ENCODE measurements at regions of chr3 and their contacts with region 1.

Region 1: DNA sequence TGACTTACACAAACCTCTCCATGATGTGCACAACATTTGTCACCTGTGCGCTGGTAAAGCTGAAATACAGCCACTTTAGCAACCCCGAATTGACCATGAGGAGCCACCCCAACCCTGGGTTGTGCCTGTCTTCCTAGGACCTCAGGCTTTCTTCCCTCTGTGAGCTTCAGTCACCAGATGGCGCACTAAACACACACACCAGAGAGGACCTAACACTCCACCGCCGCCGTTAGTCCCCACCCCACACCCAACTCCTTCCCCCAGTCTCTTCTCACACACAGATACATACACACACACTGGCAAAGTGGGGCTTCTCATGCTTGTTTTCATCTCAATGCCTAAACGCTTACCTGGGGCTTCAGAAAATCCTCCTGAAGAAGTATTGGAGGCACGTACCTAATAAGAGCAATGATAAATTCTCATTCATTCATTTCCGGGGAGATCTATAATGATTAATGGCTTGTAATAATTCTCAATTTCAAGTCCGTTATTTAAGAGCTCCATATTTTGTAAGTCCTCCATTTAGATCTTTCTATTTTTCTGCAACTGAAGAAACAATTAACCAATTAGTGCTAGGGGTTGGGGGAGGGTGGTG is 2.1 kb upstream of the CCDC80 start:
- DNase-seq: peak; percentile 88 to 94
- ATAC-seq: peak; percentile 70 to 84
- H3K4me3 ChIP-seq: 0 out of 3 replicates have a peak overlapping the region, but pooled peaks have one; percentile 20
- H3K27ac ChIP-seq: peak overlapping the region; percentile 90 to 99
- H3K4me1 ChIP-seq: peaks cover 65% of the 10 kb centered on the region
- CTCF ChIP-seq: peak; percentile 96
- EP300 ChIP-seq: no peak
- POLR2A ChIP-seq: no peak
- RAD21 ChIP-seq: peak; percentile 100

Region 2: DNA sequence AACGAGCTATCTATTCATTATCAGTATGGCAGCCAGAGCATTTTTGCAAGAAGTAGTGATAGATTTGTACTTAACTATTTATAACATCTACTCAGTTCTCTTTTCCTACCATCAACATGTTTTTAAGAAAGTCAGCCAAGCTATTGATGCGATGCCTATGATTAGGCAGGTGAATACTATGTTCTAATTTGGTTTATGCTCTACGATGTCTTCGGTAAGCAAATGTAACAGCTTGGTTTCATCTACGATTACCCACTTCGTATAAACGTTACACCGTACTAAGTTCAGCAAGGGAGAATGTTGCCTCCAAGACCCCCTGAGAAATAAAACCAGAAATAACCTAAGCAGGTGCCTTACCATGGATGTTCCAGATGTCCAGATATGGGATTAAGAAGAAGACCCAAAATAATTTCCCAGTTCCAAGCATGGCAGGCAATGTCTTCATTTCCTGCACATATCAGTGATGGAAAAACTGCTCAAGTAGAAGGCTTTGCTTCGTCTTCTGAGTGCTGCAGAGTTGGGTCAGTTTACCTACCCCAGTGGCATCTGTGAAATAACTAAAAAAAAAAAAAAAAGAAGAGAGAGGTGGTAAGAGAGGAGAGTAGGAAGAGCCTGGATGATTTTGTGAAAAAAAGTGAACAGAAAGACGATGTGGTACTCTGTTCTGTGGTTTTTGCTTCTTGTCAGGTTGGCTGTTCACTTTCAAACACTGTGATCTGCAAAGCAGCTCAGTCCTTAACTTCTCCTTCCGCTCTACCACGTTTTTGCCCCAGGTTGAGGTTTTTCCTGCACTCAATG is 143.9 kb before region 1 on chr3 and contains the start of gene BTLA:
- CTCF ChIA-PET with region 1: no interaction called
- POLR2A ChIA-PET with region 1: no interaction called
- DNase-seq: no peak
- ATAC-seq: no peak
- H3K4me3 ChIP-seq: no peak within 1 kb of the TSS
- H3K27ac ChIP-seq: no peak within 1 kb of the TSS
- H3K4me1 ChIP-seq: no peaks in the 10 kb centered on the region
- CTCF ChIP-seq: no peak
- EP300 ChIP-seq: no peak
- POLR2A ChIP-seq: no peak
- RAD21 ChIP-seq: no peak
- polyA plus RNA-seq, gene BTLA: 0.03 TPM in 1 of 2 replicates, not detected in the other

Region 3: DNA sequence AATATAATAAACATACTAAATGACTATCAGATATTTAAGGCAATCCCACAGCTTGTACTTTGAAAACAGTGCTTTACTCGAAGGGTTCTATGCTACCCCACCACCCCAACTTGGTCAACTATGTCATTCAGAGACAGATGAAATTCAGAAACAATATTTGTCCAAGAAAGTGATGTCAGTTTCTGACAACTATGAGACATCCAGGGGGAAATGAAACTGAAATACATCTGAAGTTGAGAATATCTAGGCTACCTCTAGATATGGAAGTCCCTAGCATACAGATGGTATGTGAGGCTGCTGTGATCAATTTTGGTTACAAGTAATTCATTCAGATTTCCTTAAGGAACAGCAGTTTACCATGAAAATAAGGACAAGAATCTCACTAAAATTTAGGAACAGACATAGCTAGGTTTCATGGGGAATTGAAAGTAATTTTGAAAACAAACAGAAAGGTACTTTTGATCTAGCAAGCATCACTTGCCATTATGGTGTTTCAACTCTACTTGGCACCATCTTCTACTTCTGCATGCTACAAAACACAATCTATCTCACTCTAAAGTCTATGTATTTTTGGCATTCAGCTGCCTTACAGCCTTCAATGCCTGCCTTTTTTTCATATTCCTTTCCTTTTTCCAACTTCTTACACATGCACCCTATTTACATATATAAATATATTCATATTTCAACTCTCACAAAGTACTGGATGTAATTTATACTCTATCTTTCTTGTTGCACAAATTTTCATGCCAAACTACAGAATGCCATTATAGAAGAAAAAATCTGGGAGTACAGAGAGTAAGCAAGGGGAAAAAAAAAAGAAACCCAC is 103.0 kb before region 1 on chr3:
- CTCF ChIA-PET with region 1: no interaction called
- POLR2A ChIA-PET with region 1: no interaction called
- DNase-seq: no peak
- ATAC-seq: no peak
- H3K4me3 ChIP-seq: no peak overlapping the region
- H3K27ac ChIP-seq: no peak overlapping the region
- H3K4me1 ChIP-seq: no peaks in the 10 kb centered on the region
- CTCF ChIP-seq: no peak
- EP300 ChIP-seq: no peak
- POLR2A ChIP-seq: no peak
- RAD21 ChIP-seq: no peak

Region 4: GRCh38 chr3:112582244-112582874 is 60.6 kb before region 1 on chr3:
- CTCF ChIA-PET with region 1: interaction called, 40 read pairs
- POLR2A ChIA-PET with region 1: interaction called, 18 read pairs
- DNase-seq: peak in 1 of 2 experiments; percentile 77
- ATAC-seq: peak; percentile 71 to 74; a peak in 4 of 6 replicates
- H3K4me3 ChIP-seq: no peak overlapping the region
- H3K27ac ChIP-seq: no peak overlapping the region
- H3K4me1 ChIP-seq: no peaks in the 10 kb centered on the region
- CTCF ChIP-seq: peak; percentile 83
- EP300 ChIP-seq: no peak
- POLR2A ChIP-seq: no peak
- RAD21 ChIP-seq: peak; percentile 87 to 90

Region 5: GRCh38 chr3:112681822-112682325 is 38.9 kb after region 1 on chr3:
- CTCF ChIA-PET with region 1: interaction called, 16 read pairs
- POLR2A ChIA-PET with region 1: interaction called, 10 read pairs
- DNase-seq: no peak
- ATAC-seq: peak in 1 of 2 experiments; percentile 54; a peak in 2 of 6 replicates
- H3K4me3 ChIP-seq: no peak overlapping the region
- H3K27ac ChIP-seq: peak overlapping the region; percentile 58 to 85
- H3K4me1 ChIP-seq: peaks cover 63% of the 10 kb centered on the region
- CTCF ChIP-seq: no peak
- EP300 ChIP-seq: no peak
- POLR2A ChIP-seq: no peak
- RAD21 ChIP-seq: no peak

Region 6: DNA sequence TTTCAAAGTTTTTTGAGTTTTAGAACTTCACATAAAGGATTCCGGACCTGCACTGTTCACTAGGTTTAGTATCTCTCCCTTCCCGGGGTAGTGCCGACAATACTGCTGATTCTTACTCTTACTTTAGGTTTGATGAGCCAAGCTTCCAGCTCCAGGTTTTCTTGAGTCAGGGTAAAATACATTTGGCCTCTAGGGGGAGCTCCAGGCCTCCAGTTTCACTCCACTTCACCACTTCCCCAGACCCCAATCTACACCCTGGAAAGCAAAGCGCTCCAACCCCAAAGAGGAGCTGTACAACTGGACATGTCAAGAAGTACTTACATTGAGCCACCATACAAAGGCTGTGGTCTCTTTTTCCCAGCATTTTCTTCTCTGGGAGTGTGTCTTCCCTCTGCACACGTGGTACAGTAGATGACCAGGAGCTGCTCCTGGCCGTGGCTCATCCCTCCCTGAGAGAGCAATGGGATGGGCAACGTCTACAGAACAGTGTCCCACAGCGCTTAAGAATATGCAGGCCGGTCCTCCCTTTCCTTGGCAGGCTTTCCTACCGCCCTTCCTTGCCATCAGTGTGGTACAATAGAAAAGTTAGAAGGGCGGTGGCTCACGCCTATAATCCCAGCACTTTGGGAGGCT is 91.8 kb after region 1 on chr3:
- CTCF ChIA-PET with region 1: interaction called, 101 read pairs
- POLR2A ChIA-PET with region 1: interaction called, 21 read pairs
- DNase-seq: peak; percentile 52 to 90
- ATAC-seq: peak; percentile 95 to 96
- H3K4me3 ChIP-seq: no peak overlapping the region
- H3K27ac ChIP-seq: peak overlapping the region; percentile 70 to 82
- H3K4me1 ChIP-seq: peaks cover 35% of the 10 kb centered on the region
- CTCF ChIP-seq: peak; percentile 87
- EP300 ChIP-seq: no peak
- POLR2A ChIP-seq: no peak
- RAD21 ChIP-seq: peak; percentile 95 to 97

Region 7: DNA sequence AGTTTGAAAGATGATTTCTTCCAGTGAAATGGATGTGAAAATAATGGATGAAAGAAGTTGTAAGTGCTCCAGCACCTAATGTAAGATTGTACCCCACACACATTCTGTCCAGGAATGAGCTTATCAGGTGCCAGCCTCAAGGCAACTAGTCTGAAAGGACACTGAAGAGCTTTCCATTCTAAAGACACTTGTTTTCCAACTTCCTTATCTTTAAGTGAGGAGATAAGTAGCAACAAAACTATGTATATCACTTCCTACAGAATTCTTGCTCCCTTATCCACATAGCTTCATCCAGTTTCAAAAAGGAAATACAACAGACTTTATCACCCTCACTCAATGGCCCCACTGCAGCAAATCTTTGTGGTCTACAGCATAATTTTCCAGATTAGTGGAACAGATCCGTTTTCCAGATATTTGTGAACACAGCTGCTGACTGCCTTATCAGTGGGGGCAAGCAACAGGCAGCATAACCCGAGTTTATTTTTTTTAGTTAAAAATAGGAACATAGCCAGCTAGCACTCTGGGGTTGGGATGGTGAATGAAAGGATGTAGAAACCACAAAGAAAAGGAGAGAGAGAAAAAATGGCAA is 143.1 kb after region 1 on chr3:
- CTCF ChIA-PET with region 1: interaction called, 11 read pairs
- POLR2A ChIA-PET with region 1: no interaction called
- DNase-seq: no peak
- ATAC-seq: no peak
- H3K4me3 ChIP-seq: no peak overlapping the region
- H3K27ac ChIP-seq: no peak overlapping the region
- H3K4me1 ChIP-seq: peaks cover 13% of the 10 kb centered on the region
- CTCF ChIP-seq: no peak
- EP300 ChIP-seq: no peak
- POLR2A ChIP-seq: no peak
- RAD21 ChIP-seq: no peak

Region 8: GRCh38 chr3:112822069-112823055 is 179.4 kb after region 1 on chr3:
- CTCF ChIA-PET with region 1: interaction called, 147 read pairs
- POLR2A ChIA-PET with region 1: interaction called, 3 read pairs
- DNase-seq: peak; percentile 66 to 90
- ATAC-seq: peak; percentile 88 to 92
- H3K4me3 ChIP-seq: no peak overlapping the region
- H3K27ac ChIP-seq: peak overlapping the region; percentile 82 to 85
- H3K4me1 ChIP-seq: peaks cover 36% of the 10 kb centered on the region
- CTCF ChIP-seq: no peak
- EP300 ChIP-seq: peak; percentile 61 to 66; a peak in 4 of 5 replicates
- POLR2A ChIP-seq: no peak
- RAD21 ChIP-seq: no peak

Region 9: GRCh38 chr3:113019182-113020137 is 376.5 kb after region 1 on chr3:
- CTCF ChIA-PET with region 1: interaction called, 8 read pairs
- POLR2A ChIA-PET with region 1: interaction called, 13 read pairs
- DNase-seq: peak; percentile 91 to 94
- ATAC-seq: peak; percentile 99
- H3K4me3 ChIP-seq: peak overlapping the region; percentile 90
- H3K27ac ChIP-seq: peak overlapping the region; percentile 97 to 98
- H3K4me1 ChIP-seq: peaks cover 13% of the 10 kb centered on the region
- CTCF ChIP-seq: no peak
- EP300 ChIP-seq: no peak
- POLR2A ChIP-seq: 0 out of 2 replicates have a peak, but pooled peaks have one; percentile 51
- RAD21 ChIP-seq: no peak